H1 (cell line): ENCODE measurements at regions of chr1 and their contacts with region 1.

Region 1: GRCh38 chr1:35451125-35451528 is 106.1 kb downstream of the KIAA0319L start:
- DNase-seq: peak; percentile 25 to 89
- H3K4me3 ChIP-seq: no peak overlapping the region
- H3K27ac ChIP-seq: no peak overlapping the region
- H3K4me1 ChIP-seq: no peaks in the 10 kb centered on the region
- H3K27me3 ChIP-seq: no peaks in the 10 kb centered on the region
- CTCF ChIP-seq: peak; percentile 88 to 91 (median 89)
- EP300 ChIP-seq: no peak
- POLR2A ChIP-seq: no peak
- RAD21 ChIP-seq: peak; percentile 83 to 87

Region 2: GRCh38 chr1:35408925-35409324 is 42.2 kb before region 1 on chr1:
- CTCF ChIA-PET with region 1: interaction called, 14 read pairs
- POLR2A ChIA-PET with region 1: interaction called, 3 read pairs
- DNase-seq: no peak
- H3K4me3 ChIP-seq: no peak overlapping the region
- H3K27ac ChIP-seq: no peak overlapping the region
- H3K4me1 ChIP-seq: peaks cover 0 to 3% (median 0%) of the 10 kb centered on the region in 4 experiments; a peak in 1 of 7 replicates
- H3K27me3 ChIP-seq: no peaks in the 10 kb centered on the region
- CTCF ChIP-seq: no peak
- EP300 ChIP-seq: no peak
- POLR2A ChIP-seq: no peak
- RAD21 ChIP-seq: no peak

Region 3: GRCh38 chr1:35475361-35475760 is 24.2 kb after region 1 on chr1:
- CTCF ChIA-PET with region 1: interaction called, 10 read pairs
- POLR2A ChIA-PET with region 1: no interaction called
- DNase-seq: no peak
- H3K4me3 ChIP-seq: no peak overlapping the region
- H3K27ac ChIP-seq: no peak overlapping the region
- H3K4me1 ChIP-seq: peaks cover 0 to 5% (median 2%) of the 10 kb centered on the region in 4 experiments; a peak in 1 of 7 replicates
- H3K27me3 ChIP-seq: no peaks in the 10 kb centered on the region
- CTCF ChIP-seq: no peak
- EP300 ChIP-seq: no peak
- POLR2A ChIP-seq: no peak
- RAD21 ChIP-seq: no peak

Region 4: DNA sequence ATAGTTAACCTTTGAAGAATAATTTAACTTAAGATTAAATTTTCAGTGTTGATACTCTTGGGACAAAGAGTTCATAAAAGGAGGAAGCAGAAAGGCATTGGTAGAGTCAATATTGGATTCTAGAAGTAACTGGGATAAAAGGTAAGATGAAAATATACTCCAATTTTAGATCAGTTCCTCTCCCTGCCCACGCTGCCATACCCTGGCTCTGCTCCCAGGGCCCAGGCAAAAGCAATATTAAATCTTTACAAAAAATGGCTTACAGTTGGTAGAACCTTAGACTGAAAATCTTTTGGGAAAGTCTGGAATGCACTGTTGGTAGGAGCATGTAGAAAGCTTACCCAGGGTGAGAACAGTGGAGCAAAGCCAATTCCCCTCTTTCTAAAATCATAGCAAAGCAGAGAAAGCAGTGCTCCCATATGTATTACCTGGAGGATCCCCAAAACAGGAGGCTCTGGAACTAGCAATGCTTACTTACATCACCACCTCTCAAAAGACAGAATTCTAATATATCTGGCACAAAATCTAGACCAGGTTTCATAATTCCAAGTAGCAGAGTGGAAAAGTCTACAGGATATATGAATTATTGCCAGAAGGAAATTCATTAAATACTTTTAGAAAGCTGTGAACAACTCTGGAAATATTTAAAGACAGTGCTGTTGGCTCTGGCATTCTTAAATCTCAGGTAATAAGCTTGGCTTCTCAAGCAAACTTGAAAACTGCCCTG is 81.5 kb after region 1 on chr1:
- CTCF ChIA-PET with region 1: interaction called, 19 read pairs
- POLR2A ChIA-PET with region 1: interaction called, 6 read pairs
- DNase-seq: no peak
- H3K4me3 ChIP-seq: no peak overlapping the region
- H3K27ac ChIP-seq: no peak overlapping the region
- H3K4me1 ChIP-seq: peaks cover 0 to 6% (median 4%) of the 10 kb centered on the region in 4 experiments; a peak in 5 of 7 replicates
- H3K27me3 ChIP-seq: no peaks in the 10 kb centered on the region
- CTCF ChIP-seq: no peak
- EP300 ChIP-seq: no peak
- POLR2A ChIP-seq: no peak
- RAD21 ChIP-seq: no peak

Region 5: GRCh38 chr1:35544978-35545377 is 93.9 kb after region 1 on chr1:
- CTCF ChIA-PET with region 1: interaction called, 95 read pairs
- POLR2A ChIA-PET with region 1: interaction called, 5 read pairs
- DNase-seq: peak in 1 of 2 experiments; percentile 46
- H3K4me3 ChIP-seq: no peak overlapping the region
- H3K27ac ChIP-seq: no peak overlapping the region
- H3K4me1 ChIP-seq: peaks cover 0 to 3% (median 0%) of the 10 kb centered on the region in 4 experiments; a peak in 1 of 7 replicates
- H3K27me3 ChIP-seq: no peaks in the 10 kb centered on the region
- CTCF ChIP-seq: peak; percentile 67 to 94 (median 80)
- EP300 ChIP-seq: no peak
- POLR2A ChIP-seq: no peak
- RAD21 ChIP-seq: peak; percentile 92

Region 6: DNA sequence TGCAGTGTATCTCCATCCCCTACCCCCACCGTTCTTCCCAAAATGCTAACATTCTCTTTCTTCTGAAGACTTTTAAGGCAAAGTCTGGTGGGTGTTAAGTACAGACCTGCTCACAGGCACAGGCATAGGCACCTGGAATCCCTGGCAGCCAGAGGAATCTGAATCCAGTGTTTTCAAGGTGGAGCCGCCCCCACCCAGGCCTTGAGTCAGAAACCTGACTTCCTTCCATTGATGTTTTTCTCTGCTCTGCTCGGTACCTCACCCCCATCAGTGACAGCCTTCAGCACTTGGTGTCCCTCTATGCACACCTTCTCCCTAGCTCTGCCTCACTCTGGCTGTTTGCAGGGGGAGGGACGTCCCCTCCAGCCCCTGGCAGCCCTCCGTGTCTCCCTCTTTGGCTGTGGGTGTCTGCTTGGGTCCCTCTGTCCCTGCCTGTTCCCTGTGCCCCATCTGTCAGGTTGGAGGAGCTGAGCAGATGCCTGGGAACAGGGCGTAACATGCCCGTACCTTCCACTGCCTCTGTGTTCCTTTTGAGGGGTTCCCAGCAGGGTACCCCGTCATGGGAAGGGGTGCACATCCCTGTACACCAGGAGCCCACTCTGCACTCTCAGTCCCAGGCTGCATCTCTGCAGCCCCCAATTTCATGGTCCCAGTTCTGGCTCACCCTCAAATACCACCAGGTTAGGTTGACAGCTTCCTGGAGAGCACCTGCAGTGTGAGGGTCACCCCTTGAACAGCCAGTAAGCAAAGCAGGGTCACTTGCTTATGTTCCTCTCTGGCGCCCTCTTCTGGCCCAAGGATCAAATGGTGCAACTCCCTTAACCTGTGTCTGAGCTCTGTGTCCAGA is 113.1 kb after region 1 on chr1:
- CTCF ChIA-PET with region 1: interaction called, 72 read pairs
- POLR2A ChIA-PET with region 1: no interaction called
- DNase-seq: peak in 1 of 2 experiments; percentile 94
- H3K4me3 ChIP-seq: no peak overlapping the region
- H3K27ac ChIP-seq: no peak overlapping the region
- H3K4me1 ChIP-seq: 0 out of 7 replicates have a peak, but pooled peaks cover 0 to 2% (median 0%) of the 10 kb centered on the region in 4 experiments
- H3K27me3 ChIP-seq: peaks cover 0 to under 1% (median 0%) of the 10 kb centered on the region in 4 experiments; a peak in 1 of 7 replicates
- CTCF ChIP-seq: peak in 2 of 3 experiments; percentile 86 to 91; a peak in 3 of 4 replicates
- EP300 ChIP-seq: peak in 1 of 2 experiments; percentile 37; a peak in 1 of 3 replicates
- POLR2A ChIP-seq: no peak
- RAD21 ChIP-seq: peak; percentile 64 to 77